PC-3 (cell line): ENCODE measurements at regions of chr14 and their contacts with region 1.

Region 1: DNA sequence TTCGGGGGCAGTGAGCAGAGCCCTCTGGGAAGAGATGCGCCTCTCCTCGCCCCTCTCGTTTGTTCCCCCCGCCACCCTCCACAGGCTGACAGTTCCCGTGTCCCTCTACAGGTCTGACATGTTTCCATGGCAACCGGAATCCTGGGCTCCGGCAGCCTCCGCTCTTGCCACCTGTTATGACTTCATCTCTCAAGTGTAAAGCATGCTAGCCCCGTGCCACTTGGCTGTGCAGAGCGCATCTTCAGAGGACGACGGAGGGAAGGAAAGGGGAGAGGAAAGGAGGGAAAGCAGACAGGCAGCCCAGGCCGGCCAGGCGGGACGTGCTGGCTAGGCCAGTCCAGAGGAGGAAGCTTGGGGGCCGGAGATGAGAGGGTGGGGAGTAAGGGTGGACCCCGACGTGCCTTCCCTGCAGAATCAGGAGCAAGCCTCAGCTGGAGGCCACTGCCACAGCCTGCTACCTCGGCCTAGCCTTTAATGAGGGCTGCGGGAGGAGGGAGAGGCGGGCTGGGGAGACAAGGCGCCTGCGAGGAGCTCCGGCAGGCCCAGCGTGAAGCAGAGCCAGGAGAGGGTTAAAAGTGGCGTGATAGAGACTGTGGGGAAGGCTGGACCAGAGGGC is 214.3 kb downstream of the DPF3 start:
- DNase-seq: no peak
- ATAC-seq: no peak
- H3K4me3 ChIP-seq: no peak overlapping the region
- H3K27ac ChIP-seq: no peak overlapping the region
- H3K4me1 ChIP-seq: peaks cover 31% of the 10 kb centered on the region
- H3K27me3 ChIP-seq: no peaks in the 10 kb centered on the region
- CTCF ChIP-seq: no peak

Region 2: GRCh38 chr14:72699443-72699842 is 19.8 kb after region 1 on chr14:
- CTCF ChIA-PET with region 1: interaction called, 10 read pairs
- POLR2A ChIA-PET with region 1: no interaction called
- intact Hi-C with region 1: no loop called
- DNase-seq: no peak
- ATAC-seq: no peak
- H3K4me3 ChIP-seq: no peak overlapping the region
- H3K27ac ChIP-seq: no peak overlapping the region
- H3K4me1 ChIP-seq: no peaks in the 10 kb centered on the region
- H3K27me3 ChIP-seq: no peaks in the 10 kb centered on the region
- CTCF ChIP-seq: no peak

Region 3: GRCh38 chr14:73438993-73439392 is 759.3 kb after region 1 on chr14:
- CTCF ChIA-PET with region 1: no interaction called
- POLR2A ChIA-PET with region 1: no interaction called
- intact Hi-C with region 1: loop called (anchors 2 kb)
- DNase-seq: no peak
- ATAC-seq: no peak
- H3K4me3 ChIP-seq: no peak overlapping the region
- H3K27ac ChIP-seq: no peak overlapping the region
- H3K4me1 ChIP-seq: no peaks in the 10 kb centered on the region
- H3K27me3 ChIP-seq: no peaks in the 10 kb centered on the region
- CTCF ChIP-seq: no peak

Region 4: DNA sequence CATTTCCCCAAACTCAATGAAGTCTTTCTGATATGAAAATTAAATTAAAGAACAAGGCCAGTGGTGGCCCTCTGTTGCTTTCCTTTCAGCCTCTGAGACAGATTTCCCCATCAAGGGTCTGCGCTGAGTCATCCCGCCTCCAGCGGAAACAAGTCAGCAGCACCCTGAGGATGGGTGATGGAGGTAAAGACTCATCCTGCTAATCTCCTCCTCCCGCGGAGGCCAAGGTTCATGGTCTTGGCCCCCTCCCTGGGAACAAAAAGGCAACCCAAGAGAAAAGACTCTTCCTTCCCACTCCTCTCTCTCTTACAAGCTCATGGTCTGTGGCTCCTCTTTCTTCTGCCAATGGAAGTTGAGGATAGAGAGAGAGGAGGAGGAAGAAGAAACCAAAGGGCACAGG is 787.7 kb after region 1 on chr14:
- CTCF ChIA-PET with region 1: no interaction called
- POLR2A ChIA-PET with region 1: no interaction called
- intact Hi-C with region 1: no loop called
- DNase-seq: no peak
- ATAC-seq: no peak
- H3K4me3 ChIP-seq: no peak overlapping the region
- H3K27ac ChIP-seq: no peak overlapping the region
- H3K4me1 ChIP-seq: peaks cover 29% of the 10 kb centered on the region
- H3K27me3 ChIP-seq: no peaks in the 10 kb centered on the region
- CTCF ChIP-seq: no peak